Panc1 (cell line): ENCODE measurements at regions of chr7 and their contacts with region 1.

Region 1: GRCh38 chr7:48269066-48269465 is 97.8 kb downstream of the ABCA13 start:
- DNase-seq: no peak
- ATAC-seq: no peak
- H3K4me3 ChIP-seq: no peak overlapping the region
- H3K27ac ChIP-seq: no peak overlapping the region
- H3K4me1 ChIP-seq: no peaks in the 10 kb centered on the region
- H3K27me3 ChIP-seq: peaks cover 2% of the 10 kb centered on the region
- CTCF ChIP-seq: no peak

Region 2: DNA sequence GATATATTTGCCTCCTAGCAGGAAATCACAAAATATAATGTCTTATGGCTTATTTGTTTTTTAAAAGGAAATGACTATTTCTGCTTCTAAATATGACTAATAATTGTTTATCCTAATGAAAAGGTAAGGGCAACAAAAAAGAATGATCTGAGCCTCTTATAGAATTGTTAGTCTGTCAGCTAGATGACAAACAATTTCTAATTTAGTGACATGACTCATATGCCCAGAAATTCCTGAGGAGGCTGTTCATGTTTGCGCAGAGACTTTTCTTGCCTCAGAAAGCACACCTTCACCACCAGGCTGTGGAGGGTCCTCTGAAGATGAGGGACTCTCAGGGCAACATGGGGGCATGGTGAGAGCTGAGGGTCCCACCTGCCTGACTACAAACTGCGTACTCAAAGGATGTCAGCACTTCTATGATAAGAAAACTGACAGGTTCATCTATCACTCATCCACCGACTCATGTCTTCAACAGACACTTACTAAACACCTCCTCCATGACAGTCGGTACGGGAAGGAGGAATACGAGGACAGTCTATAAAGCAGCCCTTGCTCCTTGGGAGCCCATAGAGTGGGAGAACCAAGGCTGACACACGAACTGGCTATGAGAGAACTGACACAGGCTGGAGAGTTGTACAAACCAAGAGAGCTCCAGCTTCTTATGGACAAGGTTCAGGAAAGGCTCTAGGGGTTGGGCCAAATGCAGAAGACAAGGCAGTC is 422.8 kb before region 1 on chr7:
- CTCF ChIA-PET with region 1: no interaction called
- POLR2A ChIA-PET with region 1: no interaction called
- in situ Hi-C with region 1: no loop called
- intact Hi-C with region 1: no loop called
- DNase-seq: peak; percentile 94
- ATAC-seq: peak; percentile 90
- H3K4me3 ChIP-seq: no peak overlapping the region
- H3K27ac ChIP-seq: peak overlapping the region; percentile 70
- H3K4me1 ChIP-seq: peaks cover 26% of the 10 kb centered on the region
- H3K27me3 ChIP-seq: no peaks in the 10 kb centered on the region
- CTCF ChIP-seq: no peak

Region 3: DNA sequence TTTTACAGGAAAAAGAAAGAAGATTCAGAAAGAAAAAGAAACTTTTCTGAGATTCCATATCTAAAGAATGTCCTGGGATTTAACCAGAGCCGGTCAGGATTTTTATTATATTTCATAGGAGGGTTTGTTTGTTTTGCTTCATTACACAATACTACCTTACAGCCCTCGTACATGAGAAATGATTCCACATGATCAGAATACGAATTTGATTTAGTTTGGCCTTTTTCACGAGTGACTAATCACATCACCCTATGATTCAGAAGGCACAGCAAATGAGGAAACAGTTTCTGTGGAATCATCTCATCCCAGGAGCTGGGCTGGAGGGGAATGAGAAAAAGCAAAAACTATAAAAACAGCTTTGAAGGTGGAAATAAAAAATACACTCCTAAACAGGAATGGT is 1449.7 kb after region 1 on chr7:
- CTCF ChIA-PET with region 1: no interaction called
- POLR2A ChIA-PET with region 1: interaction called, 17 read pairs
- in situ Hi-C with region 1: no loop called
- intact Hi-C with region 1: no loop called
- DNase-seq: no peak
- ATAC-seq: no peak
- H3K4me3 ChIP-seq: no peak overlapping the region
- H3K27ac ChIP-seq: no peak overlapping the region
- H3K4me1 ChIP-seq: no peaks in the 10 kb centered on the region
- H3K27me3 ChIP-seq: no peaks in the 10 kb centered on the region
- CTCF ChIP-seq: no peak